IMR-90 (cell line): ENCODE measurements at regions of chr4 and their contacts with region 1.

Region 1: GRCh38 chr4:10018818-10019461 is 2.4 kb downstream of the SLC2A9 start:
- DNase-seq: peak; percentile 93
- ATAC-seq: peak; percentile 96
- H3K4me3 ChIP-seq: peak overlapping the region; percentile 29
- H3K27ac ChIP-seq: peak overlapping the region; percentile 84
- H3K4me1 ChIP-seq: peaks cover 6% of the 10 kb centered on the region; the same call in 1 of the 2 replicates
- H3K27me3 ChIP-seq: no peaks in the 10 kb centered on the region
- CTCF ChIP-seq: peak; percentile 99
- POLR2A ChIP-seq: 0 out of 2 replicates have a peak, but pooled peaks have one; percentile 24
- RAD21 ChIP-seq: peak; percentile 77

Region 2: DNA sequence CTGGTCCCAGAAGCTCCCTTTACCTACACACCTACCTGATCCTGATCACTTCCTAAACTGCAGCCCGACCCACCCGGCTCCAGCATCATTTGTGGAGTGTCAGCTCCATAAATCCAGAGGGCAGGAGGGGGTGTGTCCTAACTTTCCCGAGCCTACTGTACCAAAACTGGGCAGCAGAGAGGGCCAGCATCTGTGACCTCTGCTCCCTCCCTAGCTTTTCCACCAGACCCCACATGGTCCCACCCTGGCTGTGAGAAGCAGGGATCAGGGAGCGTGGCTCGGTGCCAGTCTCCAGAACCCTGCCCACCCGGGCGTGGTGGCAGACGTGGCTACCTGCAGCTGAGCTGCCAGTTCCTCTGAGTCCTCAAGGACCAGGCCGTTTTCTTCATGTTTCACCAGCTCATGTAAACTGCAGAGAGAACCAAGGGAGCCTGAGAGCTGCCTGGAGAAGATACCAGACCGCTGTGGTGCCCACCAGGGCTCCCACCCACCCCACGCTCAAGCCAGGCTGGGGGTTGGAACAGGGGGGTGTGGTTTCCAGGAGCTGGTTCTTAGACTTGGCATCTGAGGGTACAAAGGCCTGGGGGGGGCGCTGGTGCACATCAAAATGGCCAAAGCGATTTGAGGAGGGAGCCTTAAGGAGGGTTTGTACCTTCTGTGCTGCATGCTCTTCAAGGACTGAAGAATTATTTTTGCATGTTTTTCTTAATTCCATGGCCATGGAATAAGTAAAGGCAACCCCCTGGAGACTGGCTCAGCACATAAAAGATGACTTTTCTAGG is 314.2 kb before region 1 on chr4:
- CTCF ChIA-PET with region 1: no interaction called
- POLR2A ChIA-PET with region 1: no interaction called
- dilution Hi-C with region 1: no loop called
- in situ Hi-C with region 1: no loop called
- intact Hi-C with region 1: loop called (anchors 10 kb)
- DNase-seq: no peak
- ATAC-seq: no peak
- H3K4me3 ChIP-seq: no peak overlapping the region
- H3K27ac ChIP-seq: no peak overlapping the region
- H3K4me1 ChIP-seq: no peaks in the 10 kb centered on the region
- H3K27me3 ChIP-seq: no peaks in the 10 kb centered on the region
- CTCF ChIP-seq: no peak
- POLR2A ChIP-seq: no peak
- RAD21 ChIP-seq: no peak

Region 3: DNA sequence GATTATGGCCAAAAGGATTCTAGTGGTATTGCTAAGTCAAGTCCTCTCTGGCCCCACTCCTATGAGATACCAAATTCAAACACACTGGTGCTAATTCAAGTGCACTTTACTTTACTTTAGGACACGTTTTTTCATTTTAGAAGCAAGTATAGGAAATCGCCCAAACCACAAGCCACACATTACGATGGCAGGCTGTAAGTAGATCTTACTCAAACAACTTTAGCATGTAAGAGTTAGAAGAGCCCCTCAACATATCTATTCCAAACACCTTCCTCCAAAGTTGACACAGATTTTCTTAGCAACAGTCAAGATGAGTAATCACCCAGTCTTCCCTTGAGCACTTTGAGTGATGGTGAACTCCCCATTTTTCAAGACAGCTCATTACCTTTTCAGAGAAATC is 193.9 kb before region 1 on chr4:
- CTCF ChIA-PET with region 1: no interaction called
- POLR2A ChIA-PET with region 1: no interaction called
- dilution Hi-C with region 1: no loop called
- in situ Hi-C with region 1: no loop called
- intact Hi-C with region 1: no loop called
- DNase-seq: no peak
- ATAC-seq: no peak
- H3K4me3 ChIP-seq: no peak overlapping the region
- H3K27ac ChIP-seq: no peak overlapping the region
- H3K4me1 ChIP-seq: no peaks in the 10 kb centered on the region
- H3K27me3 ChIP-seq: no peaks in the 10 kb centered on the region
- CTCF ChIP-seq: no peak
- POLR2A ChIP-seq: no peak
- RAD21 ChIP-seq: no peak

Region 4: GRCh38 chr4:10063544-10064300 is 44.8 kb after region 1 on chr4:
- CTCF ChIA-PET with region 1: interaction called, 4 read pairs
- POLR2A ChIA-PET with region 1: no interaction called
- dilution Hi-C with region 1: no loop called
- in situ Hi-C with region 1: no loop called
- intact Hi-C with region 1: loop called (anchors 1 kb)
- DNase-seq: peak; percentile 70
- ATAC-seq: peak; percentile 93
- H3K4me3 ChIP-seq: no peak overlapping the region
- H3K27ac ChIP-seq: no peak overlapping the region
- H3K4me1 ChIP-seq: no peaks in the 10 kb centered on the region; the same call in 1 of the 2 replicates
- H3K27me3 ChIP-seq: no peaks in the 10 kb centered on the region
- CTCF ChIP-seq: peak; percentile 66
- POLR2A ChIP-seq: no peak
- RAD21 ChIP-seq: peak; percentile 68

Region 5: GRCh38 chr4:10403633-10404445 is 384.9 kb after region 1 on chr4:
- CTCF ChIA-PET with region 1: no interaction called
- POLR2A ChIA-PET with region 1: no interaction called
- dilution Hi-C with region 1: no loop called
- in situ Hi-C with region 1: no loop called
- intact Hi-C with region 1: loop called (anchors 1 kb)
- DNase-seq: peak; percentile 30
- ATAC-seq: peak; percentile 77
- H3K4me3 ChIP-seq: no peak overlapping the region
- H3K27ac ChIP-seq: no peak overlapping the region
- H3K4me1 ChIP-seq: no peaks in the 10 kb centered on the region
- H3K27me3 ChIP-seq: no peaks in the 10 kb centered on the region
- CTCF ChIP-seq: peak; percentile 55
- POLR2A ChIP-seq: no peak
- RAD21 ChIP-seq: peak; percentile 61